ENCODE measurements at regions of chr2 and their contacts with region 1.

Region 1: DNA sequence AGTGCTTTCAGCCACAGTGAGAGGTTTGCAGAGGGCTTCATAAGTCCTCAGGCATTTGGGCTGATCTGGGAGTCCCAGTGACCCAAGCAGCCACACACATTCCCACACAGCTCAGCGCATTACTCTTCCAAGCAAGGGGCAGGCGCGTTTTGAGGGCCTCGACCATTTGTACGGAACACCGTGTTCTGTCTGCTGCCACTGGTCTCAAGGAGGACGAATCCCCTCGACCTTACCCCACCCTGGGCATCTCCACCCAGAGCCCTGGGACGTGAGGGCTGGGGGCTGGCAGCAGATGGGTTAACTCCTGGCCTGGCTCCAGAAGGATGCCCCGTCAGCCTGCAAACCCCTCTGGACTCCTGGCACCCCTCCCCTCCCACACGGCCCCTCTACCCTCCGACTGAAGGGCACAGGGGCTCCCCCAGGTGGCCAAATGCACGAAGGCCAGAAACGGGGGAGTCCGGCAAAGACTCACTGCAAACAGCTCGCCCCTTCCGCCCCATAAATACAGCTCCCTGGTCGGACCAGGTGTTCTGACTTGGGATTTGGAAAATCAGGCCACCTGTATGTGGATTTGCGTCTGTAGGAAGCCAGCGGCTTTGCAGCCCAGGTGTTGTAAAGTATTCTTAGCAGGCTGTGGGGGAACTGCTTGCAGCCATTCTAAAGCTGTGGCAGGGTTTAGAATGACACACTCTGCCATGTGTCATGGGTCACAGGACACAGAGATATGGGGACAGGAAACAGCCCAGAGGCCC is 33.6 kb upstream of the PTMA start:
- DNase-seq: peak; percentile 65
- H3K4me3 Mint-ChIP-seq: no peak overlapping the region
- H3K27ac Mint-ChIP-seq: peak overlapping the region; percentile 35
- H3K4me1 Mint-ChIP-seq: peaks cover 20% of the 10 kb centered on the region
- H3K27me3 Mint-ChIP-seq: no peaks in the 10 kb centered on the region

Region 2: GRCh38 chr2:231621129-231621879 is 53.5 kb before region 1 on chr2:
- CTCF ChIA-PET with region 1: interaction called, 43 read pairs
- POLR2A ChIA-PET with region 1: interaction called, 3 read pairs
- DNase-seq: no peak
- H3K4me3 Mint-ChIP-seq: no peak overlapping the region
- H3K27ac Mint-ChIP-seq: no peak overlapping the region
- H3K4me1 Mint-ChIP-seq: peaks cover 17% of the 10 kb centered on the region
- H3K27me3 Mint-ChIP-seq: no peaks in the 10 kb centered on the region

Region 3: DNA sequence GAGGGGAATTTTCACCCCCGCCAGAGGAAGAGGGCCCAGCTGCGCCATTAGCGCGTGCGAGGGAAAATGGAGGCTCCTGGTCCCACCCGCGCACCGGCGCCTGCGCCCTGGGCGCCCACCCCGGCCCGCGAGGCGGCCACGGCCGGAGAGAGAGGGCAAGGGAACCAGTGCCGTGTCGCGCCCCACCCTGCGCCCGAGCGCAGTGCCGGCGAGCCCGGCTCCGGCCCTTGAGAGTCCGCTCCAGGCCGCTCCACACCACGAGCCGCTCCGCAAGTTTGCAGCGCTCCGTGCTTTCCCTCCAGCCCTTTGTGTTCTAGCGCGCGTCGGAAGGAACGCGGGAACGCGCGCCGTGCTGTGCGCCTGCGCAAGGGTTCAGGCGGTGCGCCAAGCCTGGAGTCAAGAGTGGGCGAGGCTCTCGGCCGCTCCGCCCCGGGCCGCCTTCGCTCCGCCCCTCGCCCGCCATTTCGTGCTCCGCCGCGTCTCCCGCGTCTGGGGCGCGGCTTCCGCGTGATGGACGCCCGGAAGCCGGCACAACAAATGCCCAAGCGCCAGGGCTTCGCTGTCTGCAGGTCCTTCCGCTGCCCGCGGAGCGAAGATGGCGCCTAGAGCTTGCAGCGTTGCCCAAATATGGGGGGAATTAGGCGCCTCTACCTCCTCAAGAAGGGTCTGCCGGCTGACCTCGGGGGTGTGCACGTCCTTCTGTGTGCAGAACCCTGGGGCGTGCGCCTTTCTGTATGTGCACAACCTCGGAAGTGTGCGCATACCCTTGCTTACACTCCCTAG is 12.5 kb before region 1 on chr2:
- CTCF ChIA-PET with region 1: interaction called, 116 read pairs
- POLR2A ChIA-PET with region 1: interaction called, 11 read pairs
- DNase-seq: peak; percentile 98
- H3K4me3 Mint-ChIP-seq: peak overlapping the region; percentile 73
- H3K27ac Mint-ChIP-seq: peak overlapping the region; percentile 90
- H3K4me1 Mint-ChIP-seq: peaks cover 31% of the 10 kb centered on the region
- H3K27me3 Mint-ChIP-seq: no peaks in the 10 kb centered on the region

Region 4: GRCh38 chr2:231696007-231696371 is 21.2 kb after region 1 on chr2:
- CTCF ChIA-PET with region 1: interaction called, 125 read pairs
- POLR2A ChIA-PET with region 1: no interaction called
- DNase-seq: no peak
- H3K4me3 Mint-ChIP-seq: no peak overlapping the region
- H3K27ac Mint-ChIP-seq: no peak overlapping the region
- H3K4me1 Mint-ChIP-seq: no peaks in the 10 kb centered on the region
- H3K27me3 Mint-ChIP-seq: no peaks in the 10 kb centered on the region

Region 5: DNA sequence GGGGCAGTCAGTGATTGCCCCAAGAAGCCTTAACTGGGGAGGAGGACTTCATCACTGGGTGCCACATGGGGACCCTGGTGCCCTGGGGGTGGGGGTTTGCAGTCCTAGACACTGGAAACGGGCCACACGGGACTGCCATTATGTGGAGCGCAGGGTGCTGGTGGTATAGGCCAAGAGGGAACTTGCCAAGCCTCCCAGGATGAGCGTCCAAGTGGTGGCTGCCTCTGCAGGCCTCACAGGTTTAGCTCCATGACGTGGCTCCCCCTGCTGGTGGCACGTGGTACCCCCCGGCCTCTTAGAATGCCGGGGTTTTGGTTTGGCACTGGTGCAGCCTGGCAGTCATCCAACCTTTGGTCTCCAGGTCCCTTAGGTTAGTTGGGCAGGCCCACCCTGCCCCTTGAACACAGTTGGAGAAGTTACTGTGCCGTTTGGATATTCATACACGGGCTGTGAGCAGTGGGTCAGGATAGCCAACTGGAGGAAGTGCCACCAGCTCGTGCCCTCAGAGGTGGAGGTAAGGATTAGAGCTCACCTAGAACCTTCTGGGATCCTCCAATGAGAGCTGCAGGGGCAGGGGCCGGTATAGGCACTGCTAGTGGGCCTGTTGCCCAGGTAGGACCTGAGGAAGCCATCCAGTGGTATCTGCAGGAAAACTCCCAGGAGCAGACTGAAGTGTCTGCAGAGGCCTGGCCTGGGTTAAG is 39.1 kb after region 1 on chr2:
- CTCF ChIA-PET with region 1: interaction called, 244 read pairs
- POLR2A ChIA-PET with region 1: interaction called, 141 read pairs
- DNase-seq: peak; percentile 90
- H3K4me3 Mint-ChIP-seq: peak overlapping the region; percentile 17
- H3K27ac Mint-ChIP-seq: peak overlapping the region; percentile 94
- H3K4me1 Mint-ChIP-seq: peaks cover 28% of the 10 kb centered on the region
- H3K27me3 Mint-ChIP-seq: no peaks in the 10 kb centered on the region

Region 6: GRCh38 chr2:231854671-231855070 is 179.9 kb after region 1 on chr2:
- CTCF ChIA-PET with region 1: no interaction called
- POLR2A ChIA-PET with region 1: no interaction called
- DNase-seq: no peak
- H3K4me3 Mint-ChIP-seq: no peak overlapping the region
- H3K27ac Mint-ChIP-seq: no peak overlapping the region
- H3K4me1 Mint-ChIP-seq: no peaks in the 10 kb centered on the region
- H3K27me3 Mint-ChIP-seq: peaks cover 8% of the 10 kb centered on the region